Activated CD8-positive, alpha-beta memory T cell treated with anti-CD3 and anti-CD28 coated beads, Interleukin-2, amount 10 ng/mL, durations not matched to agents 7 days and 5 days (primary cell): ENCODE measurements at regions of chr11 and their contacts with region 1.

Region 1: GRCh38 chr11:36492724-36493304 is 17.3 kb downstream of the TRAF6 start:
- DNase-seq: no peak
- ATAC-seq: peak; percentile 47
- H3K4me3 Mint-ChIP-seq: no peak overlapping the region
- H3K27ac Mint-ChIP-seq: no peak overlapping the region
- H3K4me1 Mint-ChIP-seq: peaks cover 11% of the 10 kb centered on the region
- H3K27me3 Mint-ChIP-seq: no peaks in the 10 kb centered on the region

Region 2: DNA sequence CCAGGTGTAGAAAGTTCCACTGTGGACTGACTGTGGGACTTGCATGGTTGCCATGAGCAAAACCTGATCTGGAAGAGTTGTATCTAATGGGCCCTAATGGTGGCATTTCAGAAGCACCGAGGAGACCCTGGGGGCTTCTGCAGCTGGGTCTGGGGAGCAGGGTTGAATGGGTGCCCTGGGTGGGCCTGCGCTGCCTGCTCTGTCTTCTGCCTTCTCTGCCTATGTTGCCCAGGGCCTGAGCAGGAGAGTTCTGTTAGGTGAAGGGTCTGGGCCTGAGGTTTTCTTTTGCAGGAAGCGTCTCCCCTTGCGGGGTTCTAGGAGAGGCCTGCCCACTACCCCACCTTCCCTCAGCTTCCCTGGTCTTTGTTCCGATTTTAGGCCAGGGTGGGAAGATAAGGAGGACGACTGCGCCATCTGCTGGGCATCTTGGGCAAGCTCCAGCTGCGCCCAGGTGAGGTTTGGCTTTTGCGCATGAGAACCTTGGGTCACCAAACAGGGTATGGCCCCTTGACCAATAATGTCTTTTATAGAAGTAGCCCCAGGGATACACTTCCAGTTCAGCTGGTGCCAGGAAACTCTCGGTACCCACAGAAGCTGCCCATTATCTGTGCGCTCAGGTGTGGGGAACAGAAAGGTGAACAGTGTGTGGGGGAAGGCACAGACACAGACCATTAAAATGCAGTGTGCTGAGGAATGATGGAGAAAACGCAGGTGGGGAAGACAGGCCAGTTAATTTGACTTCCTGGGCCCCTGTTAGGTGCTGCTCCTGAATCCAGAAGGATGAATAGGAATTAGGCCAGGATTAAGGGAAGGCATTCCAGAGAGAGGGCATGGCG is 226.8 kb before region 1 on chr11:
- CTCF ChIA-PET with region 1: interaction called, 13 read pairs
- DNase-seq: peak; percentile 56
- ATAC-seq: peak; percentile 74
- H3K4me3 Mint-ChIP-seq: no peak overlapping the region
- H3K27ac Mint-ChIP-seq: no peak overlapping the region
- H3K4me1 Mint-ChIP-seq: no peaks in the 10 kb centered on the region
- H3K27me3 Mint-ChIP-seq: peaks cover 12% of the 10 kb centered on the region

Region 3: GRCh38 chr11:36289226-36289852 is 203.5 kb before region 1 on chr11 and contains the start of gene COMMD9:
- CTCF ChIA-PET with region 1: interaction called, 71 read pairs
- DNase-seq: peak; percentile 98
- ATAC-seq: peak; percentile 98
- H3K4me3 Mint-ChIP-seq: peak within 1 kb of the TSS; percentile 88
- H3K27ac Mint-ChIP-seq: peak within 1 kb of the TSS; percentile 69
- H3K4me1 Mint-ChIP-seq: peaks cover 24% of the 10 kb centered on the region
- H3K27me3 Mint-ChIP-seq: peaks cover 3% of the 10 kb centered on the region
- total RNA-seq, gene COMMD9: 33.2 to 40.0 TPM

Region 4: GRCh38 chr11:36376888-36377758 is 115.7 kb before region 1 on chr11:
- CTCF ChIA-PET with region 1: interaction called, 13 read pairs
- DNase-seq: peak; percentile 67
- ATAC-seq: peak; percentile 74
- H3K4me3 Mint-ChIP-seq: peak overlapping the region; percentile 90
- H3K27ac Mint-ChIP-seq: peak overlapping the region; percentile 74
- H3K4me1 Mint-ChIP-seq: peaks cover 40% of the 10 kb centered on the region
- H3K27me3 Mint-ChIP-seq: peaks cover 80% of the 10 kb centered on the region

Region 5: DNA sequence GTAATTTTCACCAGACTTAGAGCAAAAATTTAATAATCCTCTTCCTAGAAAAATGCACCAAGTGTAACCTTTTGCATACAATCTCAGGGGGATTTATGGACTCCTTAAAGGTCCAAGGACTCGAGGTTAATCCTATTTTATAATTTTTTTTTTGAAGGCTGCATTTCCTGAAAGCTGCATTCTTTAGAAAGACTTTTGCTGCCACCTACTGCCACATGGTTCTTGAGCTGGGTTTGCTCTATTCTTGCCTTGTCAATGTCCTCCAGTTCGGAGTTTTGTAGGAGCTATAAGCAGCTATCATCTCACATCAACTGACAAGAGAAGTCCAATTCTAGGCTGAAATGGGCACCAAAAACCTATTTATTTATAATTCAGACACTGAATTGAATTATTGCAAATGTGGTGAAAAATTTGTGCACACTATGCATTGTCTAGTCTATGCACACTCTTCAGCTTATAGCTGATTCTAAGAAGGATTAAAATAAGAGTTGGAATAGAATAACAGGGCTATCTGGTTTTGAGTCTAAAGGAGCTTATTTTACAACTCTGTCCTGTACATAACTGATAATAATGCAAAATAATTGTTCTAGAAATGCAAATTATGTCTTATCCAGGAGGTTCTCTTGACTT is 14.0 kb before region 1 on chr11:
- CTCF ChIA-PET with region 1: interaction called, 15 read pairs
- DNase-seq: no peak
- ATAC-seq: no peak
- H3K4me3 Mint-ChIP-seq: no peak overlapping the region
- H3K27ac Mint-ChIP-seq: no peak overlapping the region
- H3K4me1 Mint-ChIP-seq: peaks cover 5% of the 10 kb centered on the region
- H3K27me3 Mint-ChIP-seq: no peaks in the 10 kb centered on the region

Region 6: DNA sequence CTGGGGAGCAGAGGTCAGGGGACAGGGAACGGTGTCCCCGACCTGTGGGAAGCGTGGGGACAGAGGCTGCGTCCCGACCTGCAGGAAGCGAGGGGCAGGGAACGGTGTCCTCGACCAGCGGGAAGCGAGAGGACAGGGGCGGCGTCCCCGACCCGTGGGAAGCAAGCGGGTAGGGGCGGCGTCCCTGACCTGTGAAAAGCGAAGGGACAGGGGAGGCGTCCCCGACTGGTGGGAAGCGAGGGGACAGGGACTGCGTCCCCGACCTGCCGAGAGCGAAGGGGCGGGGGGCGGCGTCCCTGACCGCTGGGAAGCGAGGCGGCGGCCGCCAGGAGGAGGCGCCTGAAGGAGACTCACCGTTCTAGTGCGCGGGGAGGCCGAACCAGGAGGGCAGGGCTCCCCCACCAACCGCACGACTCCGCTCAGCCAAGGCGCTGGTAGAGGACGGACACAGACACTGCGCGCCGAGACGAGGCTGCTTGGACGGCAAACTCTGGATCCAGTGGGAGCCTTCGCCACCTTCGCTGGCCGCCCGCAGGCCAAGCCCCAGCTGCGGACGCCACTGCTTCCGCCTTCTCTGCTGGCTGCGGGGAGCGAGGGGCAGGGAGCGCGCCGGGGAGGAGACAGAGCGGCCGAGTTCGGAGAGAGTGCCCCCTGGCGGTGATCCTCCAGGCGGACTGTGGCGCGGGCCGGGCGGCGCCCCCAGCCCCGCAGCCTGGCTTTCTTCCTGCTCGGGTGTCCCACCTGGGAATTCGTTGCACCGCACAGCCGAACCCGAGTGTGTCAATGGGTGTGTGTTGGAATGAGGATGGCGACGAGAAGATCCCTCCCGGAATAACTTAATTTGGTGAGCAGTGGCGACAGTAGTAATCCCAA is 17.1 kb after region 1 on chr11 and contains the start of gene TRAF6:
- CTCF ChIA-PET with region 1: interaction called, 41 read pairs
- DNase-seq: peak; percentile 91
- ATAC-seq: peak; percentile 97
- H3K4me3 Mint-ChIP-seq: peak within 1 kb of the TSS; percentile 93
- H3K27ac Mint-ChIP-seq: peak within 1 kb of the TSS; percentile 90
- H3K4me1 Mint-ChIP-seq: peaks cover 19% of the 10 kb centered on the region
- H3K27me3 Mint-ChIP-seq: no peaks in the 10 kb centered on the region
- total RNA-seq, gene TRAF6: 9.1 to 10.9 TPM